ENCODE measurements at regions of chrX and their contacts with region 1.

Region 1: GRCh38 chrX:31178064-31178768 is 106.4 kb upstream of the FTHL17 start:
- DNase-seq: no peak
- H3K4me3 ChIP-seq: no peak overlapping the region
- H3K27ac ChIP-seq: no peak overlapping the region
- H3K4me1 ChIP-seq: no peaks in the 10 kb centered on the region
- H3K27me3 ChIP-seq: peaks cover 5% of the 10 kb centered on the region
- CTCF ChIP-seq: no peak

Region 2: GRCh38 chrX:31271615-31272471 is 93.6 kb after region 1 on chrX:
- CTCF ChIA-PET with region 1: no interaction called
- dilution Hi-C with region 1: loop called (anchors 5 kb)
- in situ Hi-C with region 1: no loop called
- intact Hi-C with region 1: no loop called
- DNase-seq: peak; percentile 49
- H3K4me3 ChIP-seq: no peak overlapping the region
- H3K27ac ChIP-seq: no peak overlapping the region
- H3K4me1 ChIP-seq: peaks cover 15% of the 10 kb centered on the region
- H3K27me3 ChIP-seq: no peaks in the 10 kb centered on the region
- CTCF ChIP-seq: no peak